Posterior vena cava (tissue), 2 donors: ENCODE measurements at regions of chr19 and their contacts with region 1.

Region 1: GRCh38 chr19:56350416-56351045 is 35.9 kb upstream of the ZSCAN5A start:
- DNase-seq: no peak

Region 2: GRCh38 chr19:56076498-56076897 is 274.0 kb before region 1 on chr19:
- intact Hi-C with region 1: loop called in 1 of 2 experiments (anchors 10 kb)
- DNase-seq: no peak

Region 3: GRCh38 chr19:56252699-56253422 is 97.7 kb before region 1 on chr19:
- intact Hi-C with region 1: loop called in 1 of 2 experiments (anchors 10 kb)
- DNase-seq: peak; percentile 90

Region 4: DNA sequence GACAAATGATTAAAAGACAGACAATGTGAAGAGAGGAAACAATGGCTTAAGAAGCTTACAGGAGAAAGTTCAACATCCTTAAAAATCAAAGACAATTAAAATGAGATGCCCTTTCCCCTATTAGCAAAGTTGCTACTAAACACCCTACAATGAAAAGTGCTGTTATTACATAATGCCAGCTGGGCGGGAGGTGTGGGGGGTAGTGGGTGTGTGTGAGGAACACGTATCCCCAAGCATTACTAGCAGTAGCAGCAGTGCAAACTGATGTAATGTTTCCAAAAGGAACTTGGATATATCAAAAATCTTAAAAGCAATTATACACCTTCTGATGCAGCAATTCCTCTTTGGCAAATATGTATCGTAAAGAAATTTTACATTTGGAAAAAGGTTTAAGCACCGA is 419.1 kb after region 1 on chr19:
- intact Hi-C with region 1: no loop called
- DNase-seq: no peak